Naive thymus-derived CD4-positive, alpha-beta T cell (primary cell): ENCODE measurements at regions of chr12 and their contacts with region 1.

Region 1: GRCh38 chr12:12467688-12468261 is 94.9 kb downstream of the DUSP16 start:
- DNase-seq: peak in 3 of 9 donors; percentile 15 to 37 (median 35)
- ATAC-seq: peak; percentile 38
- H3K4me3 ChIP-seq: no peak overlapping the region
- H3K4me3 Mint-ChIP-seq: peak overlapping the region in 9 of 10 donors; percentile 16 to 70 (median 50)
- H3K27ac ChIP-seq: peak overlapping the region; percentile 75
- H3K27ac Mint-ChIP-seq: peak overlapping the region; percentile 89 to 99 (median 96)
- H3K4me1 ChIP-seq: peaks cover 29 to 39% of the 10 kb centered on the region in 2 donors
- H3K4me1 Mint-ChIP-seq: peaks cover 19 to 63% (median 52%) of the 10 kb centered on the region in 7 donors
- H3K27me3 ChIP-seq: no peaks in the 10 kb centered on the region
- H3K27me3 Mint-ChIP-seq: no peaks in the 10 kb centered on the region

Region 2: GRCh38 chr12:12403264-12404248 is 64.2 kb before region 1 on chr12:
- CTCF ChIA-PET with region 1: no interaction called
- POLR2A ChIA-PET with region 1: no interaction called
- intact Hi-C with region 1: loop called in 1 of 2 experiments (anchors 5 kb)
- DNase-seq: peak in 7 of 9 donors; percentile 25 to 63 (median 39)
- ATAC-seq: peak; percentile 85
- H3K4me3 ChIP-seq: no peak overlapping the region
- H3K4me3 Mint-ChIP-seq: peak overlapping the region in 5 of 10 donors; percentile 6 to 21 (median 13)
- H3K27ac ChIP-seq: no peak overlapping the region
- H3K27ac Mint-ChIP-seq: peak overlapping the region; percentile 21 to 90 (median 74)
- H3K4me1 ChIP-seq: peaks cover 7 to 10% of the 10 kb centered on the region in 2 donors
- H3K4me1 Mint-ChIP-seq: peaks cover 21 to 43% (median 34%) of the 10 kb centered on the region in 7 donors
- H3K27me3 ChIP-seq: no peaks in the 10 kb centered on the region
- H3K27me3 Mint-ChIP-seq: no peaks in the 10 kb centered on the region

Region 3: GRCh38 chr12:12456637-12457036 is 11.1 kb before region 1 on chr12:
- CTCF ChIA-PET with region 1: interaction called, 8 read pairs
- POLR2A ChIA-PET with region 1: interaction called, 11 read pairs
- intact Hi-C with region 1: no loop called
- DNase-seq: no peak
- ATAC-seq: peak; percentile 82
- H3K4me3 ChIP-seq: no peak overlapping the region
- H3K4me3 Mint-ChIP-seq: peak overlapping the region in 4 of 10 donors; percentile 7 to 57 (median 30)
- H3K27ac ChIP-seq: peak overlapping the region; percentile 24
- H3K27ac Mint-ChIP-seq: peak overlapping the region in 8 of 9 donors; percentile 10 to 92 (median 50)
- H3K4me1 ChIP-seq: no peaks in the 10 kb centered on the region
- H3K4me1 Mint-ChIP-seq: peaks cover 9 to 51% (median 19%) of the 10 kb centered on the region in 7 donors
- H3K27me3 ChIP-seq: no peaks in the 10 kb centered on the region
- H3K27me3 Mint-ChIP-seq: no peaks in the 10 kb centered on the region

Region 4: DNA sequence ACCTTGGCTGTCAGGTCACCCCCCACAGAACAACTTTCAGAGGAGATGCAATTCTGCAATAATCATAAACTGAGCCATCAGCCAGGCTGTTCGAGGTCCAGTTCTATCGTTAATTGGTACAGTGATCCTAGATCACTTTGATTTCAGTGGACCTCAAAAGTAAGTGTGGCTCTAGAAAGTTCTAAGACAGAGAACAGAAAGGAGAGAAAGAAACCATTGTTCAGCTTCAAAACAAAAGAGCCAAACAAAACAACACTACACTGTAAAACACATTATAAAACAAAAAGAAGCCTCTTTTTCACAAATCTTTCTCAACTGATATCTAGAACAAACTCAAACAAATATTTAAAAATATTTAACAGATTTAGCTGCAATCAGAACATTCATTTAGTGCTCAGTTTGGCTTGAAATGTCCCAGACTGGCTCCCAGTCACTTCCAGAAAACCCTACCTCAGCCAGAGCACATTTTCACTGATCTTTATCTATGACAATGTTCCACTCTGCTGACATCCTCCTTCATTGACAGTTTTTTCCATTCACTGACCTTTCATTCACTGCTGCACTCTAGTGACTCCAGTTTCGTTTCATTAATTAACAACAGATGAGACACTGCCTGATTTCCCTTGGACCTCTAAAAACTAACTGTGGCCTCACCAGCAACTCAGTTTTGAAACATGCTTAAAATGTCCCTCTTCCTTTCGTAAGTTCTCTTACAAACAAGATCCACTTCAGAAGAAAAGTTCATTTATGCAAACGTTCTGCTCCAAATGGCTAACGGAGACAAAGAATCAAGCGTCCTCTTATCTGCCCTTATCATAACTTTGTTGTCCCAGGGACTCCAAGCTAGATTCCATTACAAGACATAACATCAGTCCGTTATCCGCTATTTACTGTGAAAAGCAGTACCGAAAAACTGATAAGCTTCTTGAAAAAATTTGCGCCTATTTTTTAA is 38.0 kb after region 1 on chr12:
- CTCF ChIA-PET with region 1: no interaction called
- POLR2A ChIA-PET with region 1: no interaction called
- intact Hi-C with region 1: loop called in 1 of 2 experiments (anchors 2 kb)
- DNase-seq: no peak
- ATAC-seq: no peak
- H3K4me3 ChIP-seq: no peak overlapping the region
- H3K4me3 Mint-ChIP-seq: peak overlapping the region in 5 of 10 donors; percentile 5 to 58 (median 38)
- H3K27ac ChIP-seq: no peak overlapping the region
- H3K27ac Mint-ChIP-seq: peak overlapping the region in 7 of 9 donors; percentile 6 to 83 (median 70)
- H3K4me1 ChIP-seq: peaks cover 3 to 5% of the 10 kb centered on the region in 2 donors
- H3K4me1 Mint-ChIP-seq: peaks cover 11 to 66% (median 38%) of the 10 kb centered on the region in 7 donors
- H3K27me3 ChIP-seq: no peaks in the 10 kb centered on the region
- H3K27me3 Mint-ChIP-seq: no peaks in the 10 kb centered on the region